CD8-positive, alpha-beta T cell (primary cell): ENCODE measurements at regions of chr15 and their contacts with region 1.

Region 1: DNA sequence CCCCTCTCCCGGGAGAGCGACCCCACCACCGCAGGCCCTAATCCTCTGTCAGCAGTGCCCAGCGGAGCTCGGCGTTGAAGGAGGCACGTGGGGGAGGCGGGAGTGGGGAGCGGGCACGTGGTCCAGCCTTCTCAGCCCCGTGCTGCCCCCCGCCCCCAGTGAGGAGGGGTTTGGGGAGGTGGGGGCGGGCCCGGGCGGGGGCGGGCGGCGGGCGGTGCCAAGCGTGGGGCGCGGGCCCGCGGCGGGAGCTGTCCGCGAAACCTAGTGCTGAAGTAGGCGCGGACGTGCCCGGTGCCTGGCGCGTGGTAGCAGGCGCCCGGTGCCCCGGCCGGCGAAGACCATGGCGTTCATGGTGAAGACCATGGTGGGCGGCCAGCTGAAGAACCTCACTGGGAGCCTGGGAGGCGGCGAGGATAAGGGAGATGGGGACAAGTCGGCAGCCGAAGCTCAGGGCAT is at the start of gene CPLX3:
- DNase-seq: peak in 6 of 9 experiments; percentile 25 to 64 (median 52)
- ATAC-seq: peak; percentile 86
- H3K4me3 ChIP-seq: no peak within 1 kb of the TSS
- H3K4me3 Mint-ChIP-seq: no peak within 1 kb of the TSS
- H3K27ac ChIP-seq: no peak within 1 kb of the TSS
- H3K27ac Mint-ChIP-seq: no peak within 1 kb of the TSS
- H3K4me1 ChIP-seq: no peaks in the 10 kb centered on the region
- H3K4me1 Mint-ChIP-seq: peaks cover 6% of the 10 kb centered on the region
- H3K27me3 ChIP-seq: peaks cover 2 to 19% of the 10 kb centered on the region in 2 experiments
- H3K27me3 Mint-ChIP-seq: peaks cover 32% of the 10 kb centered on the region
- CTCF ChIP-seq: no peak
- total RNA-seq, gene CPLX3: 0.19 to 0.36 TPM

Region 2: GRCh38 chr15:74995241-74995778 is 168.9 kb after region 1 on chr15 and contains the start of gene SCAMP5:
- CTCF ChIA-PET with region 1: no interaction called
- POLR2A ChIA-PET with region 1: no interaction called
- intact Hi-C with region 1: loop called in 1 of 2 experiments (anchors 2 kb)
- DNase-seq: peak; percentile 80 to 95 (median 91)
- ATAC-seq: peak; percentile 100
- H3K4me3 ChIP-seq: peak within 1 kb of the TSS; percentile 49 to 71
- H3K4me3 Mint-ChIP-seq: peak within 1 kb of the TSS; percentile 85
- H3K27ac ChIP-seq: no peak within 1 kb of the TSS
- H3K27ac Mint-ChIP-seq: no peak within 1 kb of the TSS
- H3K4me1 ChIP-seq: peaks cover 17% of the 10 kb centered on the region
- H3K4me1 Mint-ChIP-seq: peaks cover 11% of the 10 kb centered on the region
- H3K27me3 ChIP-seq: peaks cover 9% of the 10 kb centered on the region in 2 experiments
- H3K27me3 Mint-ChIP-seq: peaks cover 38% of the 10 kb centered on the region
- CTCF ChIP-seq: no peak
- total RNA-seq, gene SCAMP5: 0.71 to 0.72 TPM